ENCODE measurements at regions of chr6 and their contacts with region 1.

Region 1: GRCh38 chr6:26596579-26597388 is at the start of gene ABT1:
- DNase-seq: peak; percentile 99
- H3K27ac ChIP-seq: peak within 1 kb of the TSS; percentile 84
- CTCF ChIP-seq: no peak

Region 2: DNA sequence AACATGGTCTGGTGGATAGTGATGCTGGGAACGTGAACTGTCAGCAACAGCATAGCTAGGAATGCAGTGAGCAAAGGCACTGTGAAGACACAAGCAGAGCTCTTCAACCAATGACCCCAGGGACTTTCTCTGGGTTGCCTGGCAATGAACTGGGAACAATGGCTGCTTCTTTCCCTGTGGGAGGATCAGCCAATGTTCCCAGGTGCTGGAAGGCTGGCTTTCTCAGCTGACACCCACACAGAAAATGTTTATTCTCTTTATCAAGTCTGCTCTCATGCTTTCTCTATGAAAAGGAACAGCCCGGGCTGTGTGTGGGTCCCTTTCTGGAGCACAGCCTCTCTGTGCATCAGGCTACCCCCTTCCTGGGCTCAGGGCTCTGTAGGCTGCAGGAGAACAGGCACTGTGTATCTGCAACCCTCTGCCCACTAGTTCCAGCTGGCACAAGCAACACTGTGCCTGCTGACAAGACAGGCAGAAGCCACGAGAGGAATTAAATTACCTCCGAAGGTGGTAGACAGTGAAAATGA is 455.3 kb before region 1 on chr6:
- CTCF ChIA-PET with region 1: no interaction called
- POLR2A ChIA-PET with region 1: no interaction called
- DNase-seq: no peak
- H3K27ac ChIP-seq: no peak overlapping the region
- CTCF ChIP-seq: no peak

Region 3: DNA sequence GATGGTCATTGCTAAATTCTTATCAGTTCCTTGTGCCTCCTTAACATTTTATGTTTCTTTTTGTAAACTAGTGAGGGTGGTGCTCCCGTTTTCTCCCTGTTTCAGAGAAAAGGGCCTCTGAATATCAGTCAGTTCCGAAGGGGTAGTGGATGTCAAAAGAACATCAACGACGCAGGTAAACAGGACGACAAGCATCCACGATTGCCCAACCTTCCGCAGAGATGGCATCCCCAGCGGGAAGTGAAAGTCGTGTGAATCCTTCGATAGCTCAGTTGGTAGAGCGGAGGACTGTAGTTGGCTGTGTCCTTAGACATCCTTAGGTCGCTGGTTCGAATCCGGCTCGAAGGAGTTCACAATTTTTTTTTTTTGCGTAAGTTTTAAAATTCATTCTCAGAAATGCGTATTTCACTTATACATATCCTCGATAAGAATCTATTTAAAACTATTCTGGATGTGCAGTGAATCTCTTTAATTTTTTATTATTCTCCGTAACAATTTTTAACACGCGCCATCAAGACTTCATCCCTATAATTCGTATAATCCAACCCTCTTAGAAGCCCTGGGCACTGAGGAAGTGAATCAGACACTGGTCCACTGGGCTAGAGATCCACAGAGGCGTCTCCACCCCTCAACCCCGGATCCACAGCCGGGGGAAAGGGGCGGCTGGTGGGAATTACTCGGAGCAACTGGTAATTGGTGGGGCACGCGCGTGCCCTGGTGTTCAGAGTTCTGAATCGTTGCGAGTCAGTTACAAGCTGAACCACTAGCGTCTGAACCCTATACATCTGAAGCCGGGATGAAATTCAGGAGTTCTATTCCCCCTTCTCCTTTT is 28.0 kb before region 1 on chr6:
- CTCF ChIA-PET with region 1: interaction called, 39 read pairs
- POLR2A ChIA-PET with region 1: no interaction called
- DNase-seq: peak; percentile 74
- H3K27ac ChIP-seq: peak overlapping the region; percentile 59
- CTCF ChIP-seq: peak; percentile 33

Region 4: GRCh38 chr6:26576929-26577719 is 19.7 kb before region 1 on chr6:
- CTCF ChIA-PET with region 1: interaction called, 39 read pairs
- POLR2A ChIA-PET with region 1: no interaction called
- DNase-seq: no peak
- H3K27ac ChIP-seq: no peak overlapping the region
- CTCF ChIP-seq: no peak

Region 5: GRCh38 chr6:26629359-26629758 is 32.6 kb after region 1 on chr6:
- CTCF ChIA-PET with region 1: no interaction called
- POLR2A ChIA-PET with region 1: no interaction called
- DNase-seq: no peak
- H3K27ac ChIP-seq: no peak overlapping the region
- CTCF ChIP-seq: no peak